ENCODE measurements at regions of chr2 and their contacts with region 1.

Region 1: DNA sequence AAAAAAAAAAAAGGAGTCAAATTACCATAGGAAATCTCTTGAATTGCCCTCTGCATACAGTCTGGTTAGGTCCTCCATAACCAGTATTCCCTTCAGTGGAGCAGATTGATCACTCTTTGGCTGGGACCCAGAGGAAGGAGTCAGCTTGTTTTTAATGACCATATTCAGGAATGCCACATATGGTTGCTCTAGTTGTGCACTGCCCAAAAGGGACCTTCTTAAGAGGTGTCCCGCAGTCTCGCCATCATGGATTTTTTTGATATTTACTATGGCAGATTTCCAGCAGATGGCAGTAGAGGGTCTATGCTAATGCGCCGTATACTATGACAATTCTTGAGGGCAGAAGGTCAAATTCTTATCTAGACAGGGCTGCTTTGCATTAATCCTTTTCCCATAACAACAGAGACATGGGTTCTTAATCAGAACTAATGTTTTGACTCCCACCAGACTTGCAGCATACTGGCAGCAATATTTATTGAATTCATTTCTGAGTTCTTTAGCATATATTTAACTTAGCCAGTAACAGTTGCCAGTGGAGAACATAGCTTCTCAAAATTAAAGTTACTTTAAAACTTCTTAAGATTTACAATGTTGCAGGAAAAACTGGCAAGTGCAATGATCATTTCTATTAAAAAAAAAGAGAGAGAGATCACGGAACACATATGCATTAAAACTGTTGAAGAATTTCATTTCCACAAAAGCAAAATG is 31.8 kb upstream of the INPP4A start:
- DNase-seq: peak; percentile 78
- ATAC-seq: peak; percentile 94
- H3K4me3 Mint-ChIP-seq: no peak overlapping the region
- H3K27ac Mint-ChIP-seq: no peak overlapping the region
- H3K4me1 Mint-ChIP-seq: peaks cover 9% of the 10 kb centered on the region
- H3K27me3 Mint-ChIP-seq: peaks cover 4% of the 10 kb centered on the region

Region 2: DNA sequence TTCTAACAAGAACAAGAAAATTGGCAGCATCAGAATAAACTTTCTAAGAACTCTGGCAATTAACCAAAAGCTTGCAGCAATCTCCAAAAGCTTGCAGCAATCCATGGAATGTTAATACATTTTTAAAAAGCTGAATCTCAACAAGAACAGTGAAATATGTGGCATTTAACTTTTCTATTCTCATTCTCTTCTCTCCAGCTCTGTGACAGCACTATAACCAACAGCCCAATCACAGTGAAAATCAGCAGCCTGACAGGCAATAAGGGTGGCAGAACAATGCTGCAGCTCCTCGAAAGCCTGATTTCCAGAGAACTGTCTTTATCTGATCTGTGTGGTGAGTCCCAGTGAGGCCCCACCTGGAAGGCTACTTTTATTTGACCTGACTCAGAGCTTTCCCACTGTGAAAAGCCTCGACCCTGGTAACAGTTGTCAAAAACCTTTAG is 477.2 kb before region 1 on chr2:
- CTCF ChIA-PET with region 1: no interaction called
- POLR2A ChIA-PET with region 1: no interaction called
- DNase-seq: no peak
- ATAC-seq: no peak
- H3K4me3 Mint-ChIP-seq: no peak overlapping the region
- H3K27ac Mint-ChIP-seq: no peak overlapping the region
- H3K4me1 Mint-ChIP-seq: peaks cover 19% of the 10 kb centered on the region
- H3K27me3 Mint-ChIP-seq: no peaks in the 10 kb centered on the region

Region 3: DNA sequence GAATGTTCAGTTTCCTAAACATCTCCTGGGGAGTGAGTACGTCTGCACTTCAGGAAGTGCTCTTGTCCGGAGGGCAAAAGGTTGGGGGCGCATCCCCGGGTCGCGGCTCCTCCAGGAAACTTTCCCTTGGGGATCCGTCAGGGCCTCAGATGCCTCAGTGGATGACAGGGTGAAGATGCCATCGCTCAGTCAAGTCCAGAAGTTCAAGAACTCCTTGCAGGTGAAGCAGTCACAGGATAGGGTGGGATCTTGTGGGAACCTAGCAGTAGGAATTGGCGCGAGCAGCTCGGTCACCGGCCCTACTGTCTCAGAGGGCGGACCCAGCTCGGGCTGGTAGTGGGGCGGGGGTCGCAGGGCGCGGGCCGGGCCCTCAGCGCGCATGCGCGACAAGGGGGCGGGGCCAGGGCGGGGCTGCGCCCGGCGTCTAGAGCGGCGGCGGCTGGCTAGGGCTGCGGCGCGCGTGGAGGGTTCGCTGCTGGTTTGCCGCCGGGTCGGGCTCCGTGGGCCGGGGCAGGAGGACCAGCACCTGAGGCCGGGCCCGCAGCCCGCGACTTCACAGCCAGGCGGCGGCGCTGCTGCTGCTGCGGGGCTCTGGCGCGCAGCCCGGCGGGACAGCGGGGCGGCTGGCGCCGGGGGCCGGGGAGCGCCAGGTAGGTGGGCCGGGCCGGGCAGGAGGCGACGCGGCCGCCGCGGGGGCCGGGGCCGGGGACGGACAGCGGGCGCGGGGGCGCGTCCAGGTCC is 31.7 kb after region 1 on chr2 and contains the start of gene INPP4A:
- CTCF ChIA-PET with region 1: interaction called, 12 read pairs
- POLR2A ChIA-PET with region 1: interaction called, 3 read pairs
- DNase-seq: peak; percentile 78
- ATAC-seq: peak; percentile 72
- H3K4me3 Mint-ChIP-seq: peak within 1 kb of the TSS; percentile 95
- H3K27ac Mint-ChIP-seq: peak within 1 kb of the TSS; percentile 92
- H3K4me1 Mint-ChIP-seq: peaks cover 33% of the 10 kb centered on the region
- H3K27me3 Mint-ChIP-seq: no peaks in the 10 kb centered on the region
- total RNA-seq, gene INPP4A: 152 to 157 TPM

Region 4: GRCh38 chr2:98487806-98488651 is 75.1 kb after region 1 on chr2:
- CTCF ChIA-PET with region 1: interaction called, 23 read pairs
- POLR2A ChIA-PET with region 1: no interaction called
- DNase-seq: peak; percentile 59
- ATAC-seq: peak; percentile 37
- H3K4me3 Mint-ChIP-seq: no peak overlapping the region
- H3K27ac Mint-ChIP-seq: peak overlapping the region; percentile 8
- H3K4me1 Mint-ChIP-seq: peaks cover 96% of the 10 kb centered on the region
- H3K27me3 Mint-ChIP-seq: no peaks in the 10 kb centered on the region

Region 5: DNA sequence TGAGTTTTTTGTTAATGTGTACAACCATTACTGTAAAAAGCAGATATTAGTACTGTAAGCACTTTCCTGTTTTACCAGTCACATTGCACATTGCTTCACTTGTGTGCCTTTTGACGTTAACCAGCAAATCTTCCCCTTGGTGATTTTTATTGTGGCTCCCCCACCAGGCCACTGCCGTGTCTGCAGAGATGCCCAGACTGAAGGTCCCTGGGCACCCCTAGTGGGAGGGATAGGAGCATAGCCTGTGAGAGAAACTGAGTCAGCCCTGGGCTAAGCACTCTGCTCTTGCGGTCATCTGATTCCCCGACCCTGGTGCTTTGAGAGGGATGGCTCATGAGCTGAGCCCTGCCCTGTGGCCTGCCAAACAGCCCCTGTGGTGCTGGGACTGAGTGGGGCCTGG is 105.2 kb after region 1 on chr2:
- CTCF ChIA-PET with region 1: interaction called, 44 read pairs
- POLR2A ChIA-PET with region 1: no interaction called
- DNase-seq: peak; percentile 65
- ATAC-seq: peak; percentile 67
- H3K4me3 Mint-ChIP-seq: no peak overlapping the region
- H3K27ac Mint-ChIP-seq: peak overlapping the region; percentile 78
- H3K4me1 Mint-ChIP-seq: peaks cover 63% of the 10 kb centered on the region
- H3K27me3 Mint-ChIP-seq: no peaks in the 10 kb centered on the region

Region 6: DNA sequence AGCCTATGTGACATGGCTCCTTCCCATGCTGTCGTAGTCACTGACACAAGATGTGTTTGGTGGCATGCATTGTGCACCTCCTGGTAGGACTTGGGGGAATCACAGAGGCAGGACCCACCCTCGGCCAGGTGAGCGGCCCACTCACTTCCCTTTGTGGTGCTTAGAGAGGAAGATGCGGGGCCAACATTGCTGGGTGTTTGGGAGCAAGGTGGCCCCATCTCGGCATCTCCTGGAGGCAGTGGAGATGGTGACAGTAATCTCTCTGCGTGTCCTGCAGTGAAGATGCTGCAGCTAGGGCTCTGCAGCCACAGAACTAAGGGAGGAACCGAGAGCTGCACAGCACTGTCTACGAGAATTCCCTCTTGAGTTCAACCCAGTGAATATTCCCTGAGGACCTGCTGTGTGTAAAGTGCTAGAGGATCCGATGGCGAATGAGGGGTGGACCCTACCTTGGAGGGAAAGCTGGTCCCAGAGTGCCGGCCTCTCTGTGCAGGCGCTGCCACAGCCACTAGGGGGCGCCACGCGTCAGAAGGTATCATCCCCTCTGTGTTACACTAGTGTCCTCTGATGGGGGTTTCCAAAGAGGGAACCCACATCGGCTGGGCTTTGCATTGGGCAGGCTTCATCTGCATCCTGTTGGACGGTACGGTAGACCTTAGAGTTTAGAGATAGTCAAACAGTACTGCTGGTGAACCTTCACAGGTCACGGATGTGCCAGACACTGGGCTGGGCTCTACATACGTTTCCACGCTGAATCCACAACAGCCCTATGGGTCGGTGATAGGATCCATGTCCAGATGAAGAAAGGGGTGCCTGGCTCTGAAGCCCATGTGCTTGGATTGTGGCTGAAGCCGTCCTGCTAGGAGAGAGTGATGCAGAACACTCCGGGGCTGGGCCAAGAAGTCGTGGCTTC is 156.2 kb after region 1 on chr2:
- CTCF ChIA-PET with region 1: interaction called, 10 read pairs
- POLR2A ChIA-PET with region 1: no interaction called
- DNase-seq: peak; percentile 73
- ATAC-seq: peak; percentile 76
- H3K4me3 Mint-ChIP-seq: no peak overlapping the region
- H3K27ac Mint-ChIP-seq: peak overlapping the region; percentile 69
- H3K4me1 Mint-ChIP-seq: peaks cover 15% of the 10 kb centered on the region
- H3K27me3 Mint-ChIP-seq: no peaks in the 10 kb centered on the region

Measured in activated CD8-positive, alpha-beta T cell treated with anti-CD3 and anti-CD28 coated beads, Interleukin-2, amount 10 ng/mL, durations not matched to agents 7 days and 5 days (primary cell).